T-cell (primary cell): ENCODE measurements at regions of chr10 and their contacts with region 1.

Region 1: GRCh38 chr10:25016376-25017154 is at the start of gene THNSL1:
- DNase-seq: peak; percentile 91 to 99 (median 96)
- ATAC-seq: peak; percentile 95 to 98 (median 96)
- H3K4me3 ChIP-seq: peak within 1 kb of the TSS; percentile 86 to 89
- H3K4me3 Mint-ChIP-seq: peak within 1 kb of the TSS; percentile 87 to 91 (median 88)
- H3K27ac ChIP-seq: peak within 1 kb of the TSS; percentile 90
- H3K27ac Mint-ChIP-seq: peak within 1 kb of the TSS; percentile 96 to 98
- H3K4me1 ChIP-seq: peaks cover 10 to 17% of the 10 kb centered on the region in 2 experiments
- H3K4me1 Mint-ChIP-seq: peaks cover 23 to 37% (median 28%) of the 10 kb centered on the region in 3 donors
- H3K27me3 ChIP-seq: no peaks in the 10 kb centered on the region
- H3K27me3 Mint-ChIP-seq: no peaks in the 10 kb centered on the region
- total RNA-seq, gene THNSL1: 1.6 to 8.1 (median 6.4) TPM

Region 2: GRCh38 chr10:24617771-24618391 is 398.7 kb before region 1 on chr10:
- CTCF ChIA-PET with region 1: interaction called in 1 of 2 experiments, 5 read pairs
- POLR2A ChIA-PET with region 1: interaction called, 9 to 10 read pairs
- DNase-seq: peak in 33 of 35 experiments; percentile 10 to 75 (median 38)
- ATAC-seq: no peak
- H3K4me3 ChIP-seq: no peak overlapping the region
- H3K4me3 Mint-ChIP-seq: peak overlapping the region in 2 of 3 donors; percentile 18 to 56
- H3K27ac ChIP-seq: no peak overlapping the region
- H3K27ac Mint-ChIP-seq: peak overlapping the region; percentile 70 to 75
- H3K4me1 ChIP-seq: peaks cover 9 to 17% of the 10 kb centered on the region in 2 experiments
- H3K4me1 Mint-ChIP-seq: peaks cover 24 to 38% (median 25%) of the 10 kb centered on the region in 3 donors
- H3K27me3 ChIP-seq: no peaks in the 10 kb centered on the region
- H3K27me3 Mint-ChIP-seq: no peaks in the 10 kb centered on the region